Right ventricle myocardium inferior (tissue), 1 donor: ENCODE measurements at regions of chr2 and their contacts with region 1.

Region 1: GRCh38 chr2:162343824-162344616 is at the start of gene GCA:
- DNase-seq: peak; percentile 99
- ATAC-seq: peak; percentile 100
- total RNA-seq, gene GCA: 11.2 TPM

Region 2: GRCh38 chr2:162318328-162319180 is 25.5 kb before region 1 on chr2 and contains the start of gene IFIH1:
- intact Hi-C with region 1: loop called (anchors 2 kb)
- DNase-seq: peak; percentile 89
- ATAC-seq: peak; percentile 96
- total RNA-seq, gene IFIH1: 6.0 TPM

Region 3: DNA sequence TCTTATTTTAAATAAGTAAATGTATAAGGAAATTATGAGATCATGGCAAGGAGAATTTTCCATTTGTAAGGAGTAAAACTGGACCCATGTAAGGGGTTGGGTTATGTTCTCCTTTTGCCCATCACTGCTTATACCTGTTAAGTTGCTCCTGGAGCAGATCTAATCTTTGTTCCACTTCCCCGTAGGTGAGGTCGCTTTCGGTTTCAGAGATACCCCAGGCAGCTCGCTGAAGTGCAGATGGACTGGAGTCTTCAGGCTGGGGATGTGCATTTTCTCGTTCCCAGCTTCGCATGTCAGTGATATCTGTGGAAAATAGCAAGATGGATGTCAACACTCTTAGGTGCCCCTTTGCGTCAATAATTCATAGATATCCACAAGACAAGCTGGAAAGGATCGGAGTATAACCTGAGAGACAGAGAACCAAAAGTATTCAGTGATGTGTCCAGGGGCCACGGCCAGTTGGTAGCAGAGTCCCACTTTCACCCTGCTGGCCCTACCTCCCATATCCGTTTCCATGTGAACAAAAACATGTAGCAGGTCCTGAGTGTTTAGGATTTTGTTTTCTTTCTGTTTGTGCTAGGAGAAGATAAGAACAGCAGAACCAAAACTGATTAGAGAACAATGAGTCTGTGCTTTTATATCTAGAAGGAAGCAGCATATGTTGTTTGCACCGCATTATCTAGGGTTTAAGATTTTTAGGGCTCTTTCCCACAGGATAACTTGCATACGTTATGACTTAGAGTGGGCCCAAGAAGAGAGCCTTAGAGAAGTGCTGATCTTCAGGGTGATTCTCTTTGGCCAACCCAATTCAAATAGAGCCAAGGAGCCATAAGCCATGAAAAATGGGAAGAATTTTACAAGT is 35.9 kb after region 1 on chr2:
- intact Hi-C with region 1: no loop called
- DNase-seq: no peak
- ATAC-seq: no peak

Region 4: GRCh38 chr2:162403884-162404283 is 59.9 kb after region 1 on chr2:
- intact Hi-C with region 1: no loop called
- DNase-seq: no peak
- ATAC-seq: no peak